CD8-positive, alpha-beta T cell (primary cell): ENCODE measurements at regions of chr1 and their contacts with region 1.

Region 1: GRCh38 chr1:110893908-110894490 is 21.1 kb downstream of the CD53 start:
- DNase-seq: peak in 1 of 9 experiments; percentile 43
- ATAC-seq: peak; percentile 46
- H3K4me3 ChIP-seq: no peak overlapping the region
- H3K4me3 Mint-ChIP-seq: peak overlapping the region; percentile 16
- H3K27ac ChIP-seq: peak overlapping the region in 1 of 2 experiments; percentile 68
- H3K27ac Mint-ChIP-seq: peak overlapping the region; percentile 89
- H3K4me1 ChIP-seq: peaks cover 85% of the 10 kb centered on the region
- H3K4me1 Mint-ChIP-seq: peaks cover 97% of the 10 kb centered on the region
- H3K27me3 ChIP-seq: no peaks in the 10 kb centered on the region
- H3K27me3 Mint-ChIP-seq: no peaks in the 10 kb centered on the region
- CTCF ChIP-seq: no peak

Region 2: GRCh38 chr1:110829955-110830553 is 63.9 kb before region 1 on chr1:
- CTCF ChIA-PET with region 1: no interaction called
- POLR2A ChIA-PET with region 1: no interaction called
- intact Hi-C with region 1: loop called in 1 of 2 experiments (anchors 5 kb)
- DNase-seq: peak in 6 of 9 experiments; percentile 8 to 73 (median 28)
- ATAC-seq: peak; percentile 97
- H3K4me3 ChIP-seq: no peak overlapping the region
- H3K4me3 Mint-ChIP-seq: no peak overlapping the region
- H3K27ac ChIP-seq: no peak overlapping the region
- H3K27ac Mint-ChIP-seq: no peak overlapping the region
- H3K4me1 ChIP-seq: peaks cover 5% of the 10 kb centered on the region
- H3K4me1 Mint-ChIP-seq: peaks cover 15% of the 10 kb centered on the region
- H3K27me3 ChIP-seq: no peaks in the 10 kb centered on the region
- H3K27me3 Mint-ChIP-seq: no peaks in the 10 kb centered on the region
- CTCF ChIP-seq: peak; percentile 91

Region 3: GRCh38 chr1:110879758-110880606 is 14.0 kb before region 1 on chr1:
- CTCF ChIA-PET with region 1: interaction called, 3 read pairs
- POLR2A ChIA-PET with region 1: interaction called, 10 read pairs
- intact Hi-C with region 1: loop called in 1 of 2 experiments (anchors 1 kb)
- DNase-seq: peak in 7 of 9 experiments; percentile 38 to 86 (median 62)
- ATAC-seq: peak; percentile 51
- H3K4me3 ChIP-seq: peak overlapping the region; percentile 0 to 25
- H3K4me3 Mint-ChIP-seq: peak overlapping the region; percentile 80
- H3K27ac ChIP-seq: peak overlapping the region; percentile 8 to 90
- H3K27ac Mint-ChIP-seq: peak overlapping the region; percentile 99
- H3K4me1 ChIP-seq: peaks cover 82% of the 10 kb centered on the region
- H3K4me1 Mint-ChIP-seq: peaks cover 84% of the 10 kb centered on the region
- H3K27me3 ChIP-seq: no peaks in the 10 kb centered on the region
- H3K27me3 Mint-ChIP-seq: no peaks in the 10 kb centered on the region
- CTCF ChIP-seq: no peak